ENCODE measurements at regions of chr1 and their contacts with region 1.

Region 1: DNA sequence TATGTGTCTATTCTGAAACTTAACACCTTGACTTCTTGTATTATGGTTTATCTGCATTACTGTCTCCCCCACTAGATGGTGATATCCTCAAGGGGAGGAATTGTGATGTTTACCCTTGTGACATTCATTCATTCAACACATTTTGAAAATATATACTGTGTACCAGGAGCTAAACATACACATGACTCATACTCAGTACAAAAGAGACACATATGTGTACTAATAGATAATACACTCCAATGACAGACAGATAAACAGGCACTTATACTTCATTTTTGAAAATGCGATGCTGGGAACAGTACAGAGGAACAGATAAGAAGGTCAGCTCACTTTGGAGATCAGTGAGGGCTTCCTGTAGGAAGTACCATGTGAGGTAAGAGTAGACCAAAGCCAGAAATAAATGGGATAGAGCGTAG is 8.9 kb upstream of the RAB3GAP2 start:
- DNase-seq: peak; percentile 12 to 26
- ATAC-seq: peak; percentile 56 to 77; a peak in 5 of 6 replicates
- H3K4me3 ChIP-seq: no peak overlapping the region
- H3K27ac ChIP-seq: no peak overlapping the region
- H3K4me1 ChIP-seq: no peaks in the 10 kb centered on the region
- CTCF ChIP-seq: peak; percentile 43
- EP300 ChIP-seq: no peak
- POLR2A ChIP-seq: no peak
- RAD21 ChIP-seq: peak; percentile 55 to 62; a peak in 4 of 5 replicates

Region 2: DNA sequence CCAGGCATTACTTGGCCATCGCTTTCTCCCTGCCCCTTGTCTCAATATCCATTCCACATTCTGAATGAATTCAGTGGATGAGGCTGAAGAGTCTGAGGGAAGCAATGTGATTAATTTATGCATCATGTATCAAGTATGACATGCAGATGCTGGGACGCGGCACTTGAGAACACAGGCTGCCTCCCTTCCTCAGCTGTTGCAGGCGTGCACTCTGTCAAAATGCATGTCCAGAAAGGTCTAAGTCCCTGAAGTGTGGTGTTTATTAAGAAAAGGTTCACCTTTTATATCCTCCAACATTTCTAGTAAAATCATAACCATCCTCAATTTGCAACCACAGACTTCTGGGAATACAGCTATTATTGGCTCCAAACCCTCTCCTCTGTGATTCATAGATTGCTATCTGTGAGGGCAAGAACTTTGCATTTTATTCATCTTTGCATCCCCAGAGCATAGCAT is 13.7 kb after region 1 on chr1:
- CTCF ChIA-PET with region 1: interaction called, 27 read pairs
- POLR2A ChIA-PET with region 1: no interaction called
- DNase-seq: no peak
- ATAC-seq: no peak
- H3K4me3 ChIP-seq: no peak overlapping the region
- H3K27ac ChIP-seq: no peak overlapping the region
- H3K4me1 ChIP-seq: no peaks in the 10 kb centered on the region
- CTCF ChIP-seq: no peak
- EP300 ChIP-seq: no peak
- POLR2A ChIP-seq: no peak
- RAD21 ChIP-seq: no peak

Region 3: GRCh38 chr1:220498188-220498587 is 217.0 kb after region 1 on chr1:
- CTCF ChIA-PET with region 1: no interaction called
- POLR2A ChIA-PET with region 1: no interaction called
- DNase-seq: no peak
- ATAC-seq: no peak
- H3K4me3 ChIP-seq: no peak overlapping the region
- H3K27ac ChIP-seq: no peak overlapping the region
- H3K4me1 ChIP-seq: no peaks in the 10 kb centered on the region
- CTCF ChIP-seq: no peak
- EP300 ChIP-seq: no peak
- POLR2A ChIP-seq: no peak
- RAD21 ChIP-seq: no peak